ENCODE measurements at regions of chr4 and their contacts with region 1.

Region 1: GRCh38 chr4:174631901-174632758 is 109.8 kb upstream of the HPGD start:
- DNase-seq: peak; percentile 75
- H3K4me3 ChIP-seq: no peak overlapping the region
- H3K27ac ChIP-seq: no peak overlapping the region
- H3K4me1 ChIP-seq: peaks cover 7% of the 10 kb centered on the region
- H3K27me3 ChIP-seq: no peaks in the 10 kb centered on the region
- CTCF ChIP-seq: peak; percentile 90

Region 2: DNA sequence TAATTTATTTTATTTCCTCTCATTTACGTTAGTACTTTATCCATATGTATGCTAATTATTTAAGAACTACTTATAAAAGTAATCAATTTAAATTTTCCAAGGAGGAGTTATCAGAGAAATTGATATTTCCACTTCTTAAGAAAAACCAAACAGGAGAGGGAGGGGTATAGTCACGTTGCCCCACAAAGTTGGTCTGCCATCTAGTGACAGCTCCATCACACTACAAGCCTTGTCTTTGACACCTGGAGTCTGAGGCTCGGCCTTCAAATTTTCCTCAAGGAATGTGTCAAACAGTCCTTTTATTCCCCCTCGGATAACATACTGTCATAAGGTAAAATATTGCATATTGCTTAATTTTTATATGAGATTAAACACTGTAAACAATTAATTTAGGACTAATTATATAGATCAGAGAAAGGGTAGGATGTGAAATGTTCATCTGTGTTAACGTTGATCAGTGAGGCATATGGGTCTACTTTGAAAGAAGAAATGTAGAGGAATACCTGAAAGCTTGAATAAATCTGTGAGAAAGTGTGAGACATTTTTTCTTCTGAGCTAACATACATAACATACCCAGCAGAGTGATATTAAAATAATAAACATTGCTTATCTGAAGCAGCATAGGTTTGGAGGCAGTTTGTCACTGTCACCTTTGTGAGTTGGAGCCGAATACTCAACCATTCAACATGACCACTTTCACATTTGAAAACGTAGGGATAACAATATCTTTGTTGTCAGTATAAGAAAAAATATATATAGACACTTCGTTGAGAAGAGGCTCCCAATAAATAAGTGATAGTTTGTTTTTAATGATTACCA is 82.5 kb after region 1 on chr4:
- CTCF ChIA-PET with region 1: no interaction called
- POLR2A ChIA-PET with region 1: no interaction called
- intact Hi-C with region 1: loop called (anchors 5 kb)
- DNase-seq: peak; percentile 68
- H3K4me3 ChIP-seq: no peak overlapping the region
- H3K27ac ChIP-seq: no peak overlapping the region
- H3K4me1 ChIP-seq: peaks cover 3% of the 10 kb centered on the region
- H3K27me3 ChIP-seq: no peaks in the 10 kb centered on the region
- CTCF ChIP-seq: peak; percentile 84